Endothelial cell of umbilical vein (primary cell): ENCODE measurements at regions of chr3 and their contacts with region 1.

Region 1: DNA sequence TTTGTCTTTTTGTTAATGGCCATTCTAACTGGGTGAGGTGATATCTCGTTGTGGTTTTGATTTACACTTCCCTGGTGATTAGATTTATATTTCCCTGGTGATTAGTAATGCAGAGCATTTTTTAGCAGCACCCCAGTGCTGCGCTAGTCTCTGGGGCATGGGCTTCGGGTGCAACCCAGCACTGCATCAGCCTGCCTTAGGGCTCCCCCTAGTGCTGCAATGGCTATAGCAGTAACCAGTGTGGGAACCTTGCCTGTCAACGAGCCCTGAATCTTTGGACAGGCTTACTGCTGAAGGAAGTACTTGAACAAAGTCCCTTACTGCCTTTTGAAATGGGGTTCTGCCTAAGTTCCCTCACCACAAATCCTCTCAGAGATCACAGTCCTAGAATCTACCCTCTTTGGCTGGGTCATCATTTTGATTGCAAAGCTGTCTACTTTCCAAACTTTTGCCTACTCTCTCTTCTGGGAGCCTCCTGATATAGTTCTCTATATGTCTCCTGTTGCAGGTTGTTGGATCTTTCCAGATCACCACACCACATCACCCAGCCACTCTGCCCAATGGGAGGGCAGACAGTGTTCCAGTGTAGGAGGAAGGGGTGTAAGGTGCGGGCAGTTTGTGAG is 79.2 kb upstream of the CCNL1 start:
- DNase-seq: peak; percentile 57
- H3K4me3 ChIP-seq: no peak overlapping the region
- H3K27ac ChIP-seq: no peak overlapping the region
- H3K4me1 ChIP-seq: peaks cover 15% of the 10 kb centered on the region
- H3K27me3 ChIP-seq: no peaks in the 10 kb centered on the region
- CTCF ChIP-seq: peak; percentile 71 to 79
- POLR2A ChIP-seq: no peak

Region 2: DNA sequence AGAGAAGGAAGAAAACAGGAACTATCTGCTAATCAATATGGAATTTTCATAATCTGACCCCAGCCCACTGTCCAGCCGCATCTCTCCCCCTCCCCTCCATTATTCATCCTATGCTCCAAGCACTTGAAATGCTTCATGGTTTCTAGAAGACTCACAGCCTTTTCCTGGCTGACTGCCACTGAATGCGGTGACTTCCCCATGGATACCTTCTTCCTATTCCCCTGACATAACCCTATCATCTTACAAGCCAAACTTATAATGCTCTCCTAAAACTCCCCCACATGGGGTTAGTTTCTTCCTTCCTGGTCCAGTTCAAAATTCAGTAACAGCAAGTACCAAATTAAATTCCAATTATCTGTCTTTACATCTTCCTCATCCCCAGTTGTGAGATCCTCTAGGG is 166.3 kb after region 1 on chr3:
- CTCF ChIA-PET with region 1: no interaction called
- POLR2A ChIA-PET with region 1: no interaction called
- dilution Hi-C with region 1: no loop called
- intact Hi-C with region 1: no loop called
- DNase-seq: no peak
- H3K4me3 ChIP-seq: no peak overlapping the region
- H3K27ac ChIP-seq: no peak overlapping the region
- H3K4me1 ChIP-seq: peaks cover 24% of the 10 kb centered on the region
- H3K27me3 ChIP-seq: no peaks in the 10 kb centered on the region
- CTCF ChIP-seq: no peak
- POLR2A ChIP-seq: no peak

Region 3: DNA sequence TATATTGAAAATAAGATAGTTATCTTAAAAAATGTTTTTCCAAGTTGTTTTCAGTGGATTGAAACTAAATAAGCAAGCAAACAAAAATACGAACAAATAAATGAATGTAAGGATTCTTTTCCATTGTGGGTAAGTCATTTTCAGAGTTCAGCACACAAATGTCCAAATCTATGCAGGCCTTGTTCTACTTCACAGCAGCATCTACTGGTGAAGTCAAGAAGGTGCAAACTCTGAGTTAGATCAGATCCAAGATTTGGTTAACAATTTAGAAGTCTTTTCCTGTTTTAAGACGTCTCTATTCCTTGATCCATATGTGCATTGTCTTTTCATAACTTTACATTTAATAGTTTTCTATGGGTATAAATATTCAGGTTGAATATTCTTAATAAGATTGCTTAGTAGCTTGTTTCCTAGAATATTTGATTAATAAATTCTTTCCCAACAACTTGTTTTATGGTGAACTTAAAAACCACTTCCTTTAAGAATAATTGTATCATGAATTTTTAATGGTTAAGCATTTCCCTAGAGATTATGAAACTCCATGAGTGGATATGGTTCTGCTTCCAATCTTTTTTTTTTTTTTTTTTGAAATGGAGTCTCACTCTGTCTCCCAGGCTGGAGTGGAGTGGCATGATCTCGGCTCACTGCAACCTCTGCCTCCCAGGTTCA is 208.0 kb after region 1 on chr3:
- CTCF ChIA-PET with region 1: no interaction called
- POLR2A ChIA-PET with region 1: no interaction called
- dilution Hi-C with region 1: no loop called
- intact Hi-C with region 1: loop called (anchors 2 kb)
- DNase-seq: peak; percentile 67
- H3K4me3 ChIP-seq: no peak overlapping the region
- H3K27ac ChIP-seq: no peak overlapping the region
- H3K4me1 ChIP-seq: peaks cover 34% of the 10 kb centered on the region
- H3K27me3 ChIP-seq: no peaks in the 10 kb centered on the region
- CTCF ChIP-seq: peak; percentile 47 to 54
- POLR2A ChIP-seq: no peak